ENCODE measurements at regions of chr9 and their contacts with region 1.

Region 1: DNA sequence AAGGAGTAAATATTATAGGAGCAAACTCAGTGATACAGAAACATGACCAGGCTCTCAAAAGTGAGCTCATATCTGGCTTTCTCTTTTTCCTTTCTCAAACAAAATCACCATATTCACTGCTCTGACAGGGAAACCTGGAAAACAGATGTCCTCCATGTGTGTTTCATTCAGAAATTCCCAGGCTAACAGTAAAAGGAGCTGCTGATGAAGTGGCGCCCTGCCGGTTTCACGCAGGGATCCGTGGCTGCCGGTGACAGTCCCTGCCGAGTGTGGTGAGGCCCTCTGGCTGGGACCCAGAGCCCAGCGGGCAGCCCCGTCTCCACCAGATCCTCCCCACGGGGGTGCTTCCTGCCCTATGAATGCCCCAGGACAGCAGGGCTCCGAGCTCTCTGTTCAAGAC is 208.1 kb downstream of the GNA14 start:
- DNase-seq: no peak
- ATAC-seq: no peak
- H3K4me3 ChIP-seq: no peak overlapping the region
- H3K27ac ChIP-seq: no peak overlapping the region
- H3K4me1 ChIP-seq: no peaks in the 10 kb centered on the region
- H3K27me3 ChIP-seq: no peaks in the 10 kb centered on the region
- CTCF ChIP-seq: no peak
- POLR2A ChIP-seq: no peak

Region 2: DNA sequence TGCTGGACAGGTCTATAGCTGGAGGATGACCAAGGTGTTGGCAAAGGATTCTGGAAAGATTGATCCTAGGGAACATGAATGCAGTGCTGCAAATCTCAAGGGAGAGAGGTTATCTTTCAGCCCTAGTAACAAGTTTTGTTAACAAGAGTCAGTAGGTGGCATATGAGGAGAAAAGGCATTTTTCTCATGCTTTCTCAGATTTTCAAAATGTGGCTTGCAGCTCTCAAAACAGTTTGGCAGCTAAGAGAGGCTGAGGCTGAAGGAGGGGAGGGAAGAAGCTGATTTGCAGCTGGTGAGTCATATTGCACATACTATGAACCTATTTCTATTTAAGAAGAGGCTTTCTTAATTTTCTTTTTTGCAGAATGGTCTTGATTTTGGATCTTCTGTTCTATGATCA is 740.1 kb before region 1 on chr9:
- in situ Hi-C with region 1: no loop called
- intact Hi-C with region 1: no loop called
- DNase-seq: no peak
- ATAC-seq: no peak
- H3K4me3 ChIP-seq: no peak overlapping the region
- H3K27ac ChIP-seq: no peak overlapping the region
- H3K4me1 ChIP-seq: no peaks in the 10 kb centered on the region
- H3K27me3 ChIP-seq: no peaks in the 10 kb centered on the region
- CTCF ChIP-seq: no peak
- POLR2A ChIP-seq: no peak

Region 3: GRCh38 chr9:77743386-77743785 is 303.3 kb after region 1 on chr9:
- in situ Hi-C with region 1: loop called in 1 of 4 experiments (anchors 10 kb)
- intact Hi-C with region 1: no loop called
- DNase-seq: no peak
- ATAC-seq: no peak
- H3K4me3 ChIP-seq: no peak overlapping the region
- H3K27ac ChIP-seq: no peak overlapping the region
- H3K4me1 ChIP-seq: peaks cover 0 to 13% of the 10 kb centered on the region in 2 donors
- H3K27me3 ChIP-seq: no peaks in the 10 kb centered on the region
- CTCF ChIP-seq: no peak
- POLR2A ChIP-seq: no peak

Region 4: GRCh38 chr9:77876091-77876490 is 436.0 kb after region 1 on chr9:
- in situ Hi-C with region 1: no loop called
- intact Hi-C with region 1: no loop called
- DNase-seq: no peak
- ATAC-seq: no peak
- H3K4me3 ChIP-seq: no peak overlapping the region
- H3K27ac ChIP-seq: no peak overlapping the region
- H3K4me1 ChIP-seq: peaks cover 0 to 5% of the 10 kb centered on the region in 2 donors
- H3K27me3 ChIP-seq: no peaks in the 10 kb centered on the region
- CTCF ChIP-seq: no peak
- POLR2A ChIP-seq: no peak

Region 5: DNA sequence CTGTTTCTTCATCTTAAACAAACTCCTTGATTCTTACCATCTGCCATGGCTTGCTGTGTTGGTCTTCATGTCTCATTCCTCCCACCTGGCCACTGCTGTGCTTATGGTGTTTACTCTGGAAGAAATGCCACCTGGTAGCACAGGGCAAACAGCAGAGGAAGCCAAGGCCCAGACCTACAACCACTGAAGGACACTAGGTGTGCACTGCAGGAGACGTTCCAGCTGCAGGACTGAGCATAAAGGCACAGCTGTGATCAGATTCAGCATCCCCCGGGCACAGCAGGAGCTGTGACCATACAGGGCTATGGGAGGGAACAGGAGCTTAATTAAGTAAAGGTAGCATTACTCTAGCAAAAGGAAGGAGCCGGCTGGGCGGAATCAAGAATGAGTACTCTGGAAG is 604.1 kb after region 1 on chr9:
- in situ Hi-C with region 1: loop called in 3 of 4 experiments (anchors 10 to 25 kb)
- intact Hi-C with region 1: no loop called
- DNase-seq: no peak
- ATAC-seq: no peak
- H3K4me3 ChIP-seq: no peak overlapping the region
- H3K27ac ChIP-seq: no peak overlapping the region
- H3K4me1 ChIP-seq: no peaks in the 10 kb centered on the region
- H3K27me3 ChIP-seq: peaks cover 0 to 2% (median 0%) of the 10 kb centered on the region in 3 donors
- CTCF ChIP-seq: no peak
- POLR2A ChIP-seq: no peak